PC-3 (cell line): ENCODE measurements at regions of chr9 and their contacts with region 1.

Region 1: DNA sequence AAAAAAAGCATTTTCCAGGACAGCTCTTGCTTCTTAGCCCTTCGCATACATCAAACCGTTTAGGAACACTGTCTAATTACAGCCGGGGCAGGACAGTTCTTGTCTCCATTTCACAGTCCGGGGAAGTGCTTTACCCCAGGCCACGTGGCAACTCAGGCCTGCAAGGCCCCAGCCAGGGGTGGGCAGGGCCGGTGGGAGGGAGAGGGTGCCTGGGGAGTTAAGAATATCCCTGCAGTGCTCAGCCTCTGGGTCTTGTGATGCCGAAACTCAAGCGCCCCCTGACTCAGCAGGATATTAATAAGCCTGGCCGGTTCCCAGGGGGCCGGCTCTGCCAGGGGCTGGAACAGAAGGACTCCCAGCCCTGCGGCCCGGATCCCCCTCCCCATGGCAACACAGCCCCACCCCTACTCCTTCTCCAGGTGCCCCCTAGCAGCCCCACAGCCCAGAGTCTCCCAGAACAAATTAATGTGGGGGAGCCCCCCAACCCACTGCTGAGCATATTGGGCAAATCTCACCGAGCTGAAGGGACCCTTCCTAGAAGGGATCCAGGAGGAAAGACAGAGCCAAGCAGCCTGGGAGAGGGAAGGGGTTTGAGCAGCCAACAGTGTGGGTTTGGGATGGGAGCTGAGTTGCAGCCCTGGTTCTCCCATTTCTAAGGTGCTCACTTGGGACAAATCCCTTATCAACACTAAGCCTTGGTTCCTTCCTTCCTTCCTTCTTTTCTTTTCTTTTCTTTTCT is 45.3 kb downstream of the PLPP7 start:
- DNase-seq: no peak
- ATAC-seq: no peak
- H3K4me3 ChIP-seq: no peak overlapping the region
- H3K27ac ChIP-seq: no peak overlapping the region
- H3K4me1 ChIP-seq: no peaks in the 10 kb centered on the region
- H3K27me3 ChIP-seq: no peaks in the 10 kb centered on the region
- CTCF ChIP-seq: no peak

Region 2: GRCh38 chr9:131116281-131117115 is 218.3 kb before region 1 on chr9:
- CTCF ChIA-PET with region 1: no interaction called
- POLR2A ChIA-PET with region 1: no interaction called
- intact Hi-C with region 1: no loop called
- DNase-seq: no peak
- ATAC-seq: no peak
- H3K4me3 ChIP-seq: no peak overlapping the region
- H3K27ac ChIP-seq: no peak overlapping the region
- H3K4me1 ChIP-seq: no peaks in the 10 kb centered on the region
- H3K27me3 ChIP-seq: no peaks in the 10 kb centered on the region
- CTCF ChIP-seq: no peak

Region 3: DNA sequence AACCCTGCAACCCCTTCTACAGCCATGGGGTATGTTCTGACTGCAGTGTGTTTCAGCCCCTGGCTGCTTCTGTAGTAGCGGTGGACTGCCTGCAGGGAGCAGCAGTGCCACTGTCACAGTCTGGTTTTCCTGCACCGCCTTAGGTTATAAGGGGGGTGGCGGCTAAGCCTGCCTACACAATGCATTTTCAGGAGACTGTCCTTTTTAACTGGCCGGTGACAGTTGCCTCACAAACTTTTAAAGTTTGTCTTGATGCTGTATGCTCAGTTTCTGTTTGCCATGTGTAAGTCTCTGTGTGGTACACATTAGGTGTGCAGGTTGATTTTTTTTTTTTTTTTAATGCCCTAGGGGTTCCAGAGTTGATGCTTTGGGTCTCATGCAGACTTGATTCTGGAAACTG is 156.4 kb before region 1 on chr9:
- CTCF ChIA-PET with region 1: interaction called, 3 read pairs
- POLR2A ChIA-PET with region 1: no interaction called
- intact Hi-C with region 1: loop called (anchors 1 kb)
- DNase-seq: peak; percentile 51
- ATAC-seq: peak; percentile 93
- H3K4me3 ChIP-seq: no peak overlapping the region
- H3K27ac ChIP-seq: no peak overlapping the region
- H3K4me1 ChIP-seq: no peaks in the 10 kb centered on the region
- H3K27me3 ChIP-seq: no peaks in the 10 kb centered on the region
- CTCF ChIP-seq: peak; percentile 72

Region 4: DNA sequence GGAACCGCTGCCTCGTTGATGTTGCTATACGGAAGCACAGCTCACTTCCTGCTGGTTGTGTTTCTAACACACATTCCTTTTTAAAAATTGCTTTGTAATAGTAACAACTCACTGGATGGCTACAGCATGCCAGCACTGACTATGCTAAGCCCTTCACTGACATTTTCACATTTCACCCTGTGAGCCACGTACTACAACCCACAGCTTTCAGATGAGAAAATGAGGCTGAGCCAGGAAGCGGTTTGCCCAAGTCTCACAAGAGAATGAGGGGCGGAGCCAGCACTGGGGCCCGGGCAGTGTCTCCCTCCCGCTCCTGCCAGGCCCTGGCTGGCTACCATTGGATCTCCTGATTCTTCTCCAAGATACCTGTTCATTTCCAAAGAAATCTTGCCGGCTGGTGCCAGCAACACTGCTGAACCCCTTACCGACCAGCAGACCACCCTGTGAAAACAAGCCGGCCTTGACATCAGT is 96.8 kb before region 1 on chr9:
- CTCF ChIA-PET with region 1: no interaction called
- POLR2A ChIA-PET with region 1: no interaction called
- intact Hi-C with region 1: no loop called
- DNase-seq: peak; percentile 8
- ATAC-seq: peak; percentile 53
- H3K4me3 ChIP-seq: no peak overlapping the region
- H3K27ac ChIP-seq: no peak overlapping the region
- H3K4me1 ChIP-seq: no peaks in the 10 kb centered on the region
- H3K27me3 ChIP-seq: no peaks in the 10 kb centered on the region
- CTCF ChIP-seq: no peak

Region 5: DNA sequence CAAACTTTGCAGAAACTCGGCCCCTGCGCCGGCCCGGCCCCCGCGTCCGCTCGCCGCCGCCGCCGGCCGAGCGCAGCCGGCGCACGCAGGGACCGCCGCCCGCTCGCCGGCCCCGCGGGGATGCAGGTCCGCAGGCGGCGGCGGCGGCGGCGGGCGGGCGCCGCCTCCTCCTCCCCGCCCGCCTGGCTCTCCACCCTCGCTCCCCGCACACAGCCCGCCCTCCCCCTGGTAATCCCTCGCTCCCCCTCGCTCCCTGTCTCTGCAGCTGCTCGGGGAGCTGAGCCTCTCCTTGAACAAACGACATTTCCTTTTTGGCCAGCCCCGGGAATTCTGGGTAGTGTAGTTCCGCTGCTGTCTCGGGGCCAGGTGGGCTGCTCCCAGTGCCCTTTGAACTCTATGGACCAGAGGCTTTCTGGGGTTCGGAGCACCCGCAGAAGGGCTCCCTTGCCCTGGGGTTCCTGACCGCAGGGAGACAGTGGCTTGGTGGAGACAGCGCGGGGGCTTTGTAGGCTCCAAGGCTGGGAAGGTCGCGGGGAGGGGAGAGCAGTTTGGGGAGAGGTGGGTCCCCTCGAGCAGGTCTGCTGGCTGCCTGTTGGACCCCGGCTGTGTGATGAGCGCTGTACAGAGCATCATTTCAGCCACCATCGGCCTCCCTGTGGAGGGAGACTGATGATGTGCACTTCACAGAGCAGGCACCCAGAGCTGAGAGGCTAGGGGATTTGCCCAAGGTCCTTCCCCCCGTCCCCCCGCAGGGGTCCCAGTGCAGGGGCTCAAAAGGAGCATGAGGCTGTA is 56.7 kb before region 1 on chr9:
- CTCF ChIA-PET with region 1: no interaction called
- POLR2A ChIA-PET with region 1: no interaction called
- intact Hi-C with region 1: no loop called
- DNase-seq: peak; percentile 61
- ATAC-seq: peak; percentile 88
- H3K4me3 ChIP-seq: peak overlapping the region; percentile 60; the same call in 1 of the 2 replicates
- H3K27ac ChIP-seq: no peak overlapping the region
- H3K4me1 ChIP-seq: no peaks in the 10 kb centered on the region
- H3K27me3 ChIP-seq: peaks cover 18% of the 10 kb centered on the region
- CTCF ChIP-seq: no peak